ENCODE measurements at regions of chr6 and their contacts with region 1.

Region 1: DNA sequence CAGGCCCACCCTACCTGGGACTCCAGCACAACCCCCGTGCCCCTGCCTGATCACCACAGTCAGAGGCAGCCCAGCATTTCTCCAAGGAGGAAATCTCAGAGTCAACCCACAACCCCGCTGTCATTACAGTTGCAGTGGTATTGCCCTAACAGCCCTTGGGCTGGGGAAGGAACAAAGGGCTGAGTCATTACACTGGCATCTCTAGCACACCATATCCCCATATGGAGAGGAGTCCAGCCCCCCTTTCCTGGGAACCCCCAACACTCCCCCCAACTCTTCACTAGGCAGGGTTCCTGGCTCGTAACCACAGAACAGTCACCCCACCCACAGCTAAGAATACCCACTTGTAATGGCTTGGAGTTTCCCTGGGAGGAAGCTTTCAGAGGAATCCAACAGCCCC is 149.4 kb upstream of the OGFRL1 start:
- DNase-seq: no peak
- ATAC-seq: no peak
- H3K4me3 ChIP-seq: no peak overlapping the region
- H3K27ac ChIP-seq: no peak overlapping the region
- H3K4me1 ChIP-seq: no peaks in the 10 kb centered on the region
- H3K27me3 ChIP-seq: no peaks in the 10 kb centered on the region
- CTCF ChIP-seq: no peak
- EP300 ChIP-seq: no peak
- POLR2A ChIP-seq: no peak
- RAD21 ChIP-seq: no peak

Region 2: GRCh38 chr6:71168233-71168765 is 29.1 kb after region 1 on chr6:
- CTCF ChIA-PET with region 1: no interaction called
- POLR2A ChIA-PET with region 1: no interaction called
- in situ Hi-C with region 1: no loop called
- intact Hi-C with region 1: loop called (anchors 1 kb)
- DNase-seq: no peak
- ATAC-seq: no peak
- H3K4me3 ChIP-seq: no peak overlapping the region
- H3K27ac ChIP-seq: no peak overlapping the region
- H3K4me1 ChIP-seq: no peaks in the 10 kb centered on the region
- H3K27me3 ChIP-seq: no peaks in the 10 kb centered on the region
- CTCF ChIP-seq: no peak
- EP300 ChIP-seq: no peak
- POLR2A ChIP-seq: no peak
- RAD21 ChIP-seq: no peak

Region 3: GRCh38 chr6:72406517-72406916 is 1267.3 kb after region 1 on chr6:
- CTCF ChIA-PET with region 1: no interaction called
- POLR2A ChIA-PET with region 1: no interaction called
- in situ Hi-C with region 1: no loop called
- intact Hi-C with region 1: no loop called
- DNase-seq: no peak
- ATAC-seq: no peak
- H3K4me3 ChIP-seq: no peak overlapping the region
- H3K27ac ChIP-seq: no peak overlapping the region
- H3K4me1 ChIP-seq: no peaks in the 10 kb centered on the region
- H3K27me3 ChIP-seq: no peaks in the 10 kb centered on the region
- CTCF ChIP-seq: no peak
- EP300 ChIP-seq: no peak
- POLR2A ChIP-seq: no peak
- RAD21 ChIP-seq: no peak

Measured in K562 (cell line).